Left colon (tissue), 2 donors: ENCODE measurements at regions of chr2 and their contacts with region 1.

Region 1: DNA sequence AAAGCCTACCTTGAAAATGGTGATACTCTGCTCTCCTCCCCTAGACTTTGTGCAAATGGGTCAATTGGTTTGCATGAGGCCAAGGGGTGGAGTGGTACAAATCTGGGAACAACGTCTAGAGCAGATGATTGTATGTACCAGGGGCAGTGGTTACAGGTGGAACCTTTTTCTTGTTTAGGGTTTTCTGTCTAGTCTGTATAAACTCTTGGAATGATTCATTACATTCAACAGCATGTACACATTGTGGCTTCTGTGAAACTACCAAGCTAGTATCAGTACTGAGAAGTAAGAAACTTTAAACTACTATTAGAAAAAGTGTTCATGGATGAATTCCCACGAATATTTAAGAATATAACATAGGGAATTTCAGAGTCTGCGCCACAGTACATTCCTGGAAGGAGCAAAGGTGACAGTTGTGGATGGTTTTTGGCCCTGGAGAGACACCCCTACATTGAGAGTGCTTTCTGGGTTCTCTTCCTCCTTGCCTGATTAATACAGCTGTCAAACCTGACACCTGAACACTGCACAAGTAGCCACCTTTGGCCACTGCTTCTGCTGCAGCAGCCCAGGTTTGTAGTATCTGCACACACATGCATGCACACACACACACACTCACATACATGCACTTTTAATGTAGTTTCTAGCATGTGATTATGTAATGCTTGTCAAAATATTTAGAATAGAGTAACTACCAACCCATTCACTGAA is 30.0 kb downstream of the CFAP221 start:
- DNase-seq: no peak
- ATAC-seq: no peak

Region 2: GRCh38 chr2:119422360-119423107 is 151.7 kb before region 1 on chr2:
- intact Hi-C with region 1: no loop called
- DNase-seq: no peak
- ATAC-seq: no peak

Region 3: GRCh38 chr2:119943058-119943457 is 368.8 kb after region 1 on chr2:
- intact Hi-C with region 1: loop called in 1 of 2 experiments (anchors 10 kb)
- DNase-seq: no peak
- ATAC-seq: no peak